AG04450 (cell line): ENCODE measurements at regions of chr1 and their contacts with region 1.

Region 1: DNA sequence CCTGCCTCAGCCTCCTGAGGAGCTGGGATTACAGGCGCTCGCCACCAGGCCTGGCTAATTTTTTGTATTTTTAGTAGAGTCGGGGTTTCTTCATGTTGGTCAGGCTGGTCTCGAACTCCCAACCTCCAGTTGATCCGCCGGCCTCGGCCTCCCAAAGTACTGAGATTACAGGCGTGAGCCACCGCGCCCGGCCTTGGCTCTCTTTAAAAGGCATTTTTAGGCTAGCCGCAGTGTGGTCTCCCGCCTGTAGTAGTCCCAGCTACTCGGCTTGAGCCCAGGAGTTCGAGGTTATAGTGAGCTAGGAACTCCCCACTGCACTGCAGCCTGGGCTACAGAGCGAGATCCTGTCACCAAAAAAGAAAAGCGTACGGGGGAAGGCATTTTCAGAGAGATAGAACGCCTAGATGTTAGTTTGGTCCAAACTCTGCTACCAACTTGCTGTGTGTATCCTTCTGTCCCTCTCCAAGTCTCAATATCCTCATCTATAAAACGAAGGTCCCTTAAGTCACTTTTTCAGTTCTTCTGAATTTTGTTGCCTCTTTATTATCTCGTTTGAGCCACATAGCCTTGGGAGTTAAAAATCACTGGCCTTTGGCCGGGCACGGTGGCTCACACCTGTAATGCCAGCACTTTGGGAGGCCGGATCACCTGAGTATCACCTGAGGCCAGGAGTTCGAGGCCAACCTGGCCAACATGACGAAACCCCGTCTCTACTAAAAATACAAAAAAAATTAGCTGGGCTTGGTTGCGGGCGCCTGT is 734 bp downstream of the MED18 start:
- DNase-seq: no peak
- H3K4me3 ChIP-seq: peak overlapping the region; percentile 85
- H3K27ac ChIP-seq: peak overlapping the region; percentile 86
- H3K27me3 ChIP-seq: no peaks in the 10 kb centered on the region
- CTCF ChIP-seq: 0 out of 2 replicates have a peak, but pooled peaks have one; percentile 13

Region 2: GRCh38 chr1:28259307-28260167 is 70.0 kb before region 1 on chr1 and contains the start of gene SESN2:
- CTCF ChIA-PET with region 1: no interaction called
- POLR2A ChIA-PET with region 1: interaction called, 11 read pairs
- DNase-seq: peak; percentile 95
- H3K4me3 ChIP-seq: peak within 1 kb of the TSS; percentile 93
- H3K27ac ChIP-seq: peak within 1 kb of the TSS; percentile 95
- H3K27me3 ChIP-seq: no peaks in the 10 kb centered on the region
- CTCF ChIP-seq: no peak
- polyA plus RNA-seq, gene SESN2: 27.5 and 31.9 TPM in 2 replicates

Region 3: DNA sequence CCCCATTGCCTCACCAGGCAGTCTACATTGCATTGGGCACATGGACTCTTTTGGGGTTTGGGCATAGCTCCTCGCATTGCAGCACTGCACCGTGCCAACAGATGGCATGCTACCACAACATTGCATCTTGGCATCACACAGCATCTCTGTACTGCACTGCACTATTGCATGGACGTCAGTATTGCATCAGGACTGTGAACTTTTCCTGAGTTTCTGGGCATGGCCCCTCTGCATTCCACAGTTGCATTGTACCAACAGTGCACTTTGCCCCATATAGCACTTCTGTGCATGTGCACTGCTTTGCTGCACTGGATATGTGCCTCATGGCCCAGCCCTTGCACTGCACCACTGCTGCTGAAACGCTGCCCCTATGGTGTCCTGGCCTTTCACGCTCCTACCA is 916.3 kb after region 1 on chr1:
- CTCF ChIA-PET with region 1: no interaction called
- POLR2A ChIA-PET with region 1: no interaction called
- DNase-seq: no peak
- H3K4me3 ChIP-seq: no peak overlapping the region
- H3K27ac ChIP-seq: no peak overlapping the region
- H3K27me3 ChIP-seq: no peaks in the 10 kb centered on the region
- CTCF ChIP-seq: peak; percentile 60